Right ventricle myocardium inferior (tissue), 1 donor: ENCODE measurements at regions of chr3 and their contacts with region 1.

Region 1: GRCh38 chr3:197186887-197187588 is 111.4 kb downstream of the DLG1 start:
- DNase-seq: no peak
- ATAC-seq: no peak

Region 2: DNA sequence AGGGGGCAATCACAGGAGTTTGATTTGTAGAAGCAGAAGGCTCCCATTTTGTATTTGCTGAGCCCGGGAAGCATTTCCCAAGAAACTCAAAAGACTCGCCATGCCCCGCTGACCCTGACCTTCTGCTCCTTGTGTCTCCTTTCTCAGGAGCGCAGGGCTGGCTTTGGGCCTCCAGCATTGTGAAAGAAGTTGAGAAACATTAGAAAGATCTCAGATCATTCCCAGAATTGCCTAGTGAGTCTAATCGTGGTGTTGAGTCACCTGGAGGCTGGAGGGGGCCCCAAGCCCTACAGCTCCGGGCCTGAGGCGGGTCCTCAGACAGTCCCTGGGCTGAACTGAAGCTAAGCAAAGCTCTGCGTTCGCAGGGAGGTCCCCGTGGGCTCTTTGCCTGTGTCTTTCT is 207.5 kb before region 1 on chr3:
- intact Hi-C with region 1: loop called (anchors 2 kb)
- DNase-seq: no peak
- ATAC-seq: no peak